ENCODE measurements at regions of chr4 and their contacts with region 1.

Region 1: DNA sequence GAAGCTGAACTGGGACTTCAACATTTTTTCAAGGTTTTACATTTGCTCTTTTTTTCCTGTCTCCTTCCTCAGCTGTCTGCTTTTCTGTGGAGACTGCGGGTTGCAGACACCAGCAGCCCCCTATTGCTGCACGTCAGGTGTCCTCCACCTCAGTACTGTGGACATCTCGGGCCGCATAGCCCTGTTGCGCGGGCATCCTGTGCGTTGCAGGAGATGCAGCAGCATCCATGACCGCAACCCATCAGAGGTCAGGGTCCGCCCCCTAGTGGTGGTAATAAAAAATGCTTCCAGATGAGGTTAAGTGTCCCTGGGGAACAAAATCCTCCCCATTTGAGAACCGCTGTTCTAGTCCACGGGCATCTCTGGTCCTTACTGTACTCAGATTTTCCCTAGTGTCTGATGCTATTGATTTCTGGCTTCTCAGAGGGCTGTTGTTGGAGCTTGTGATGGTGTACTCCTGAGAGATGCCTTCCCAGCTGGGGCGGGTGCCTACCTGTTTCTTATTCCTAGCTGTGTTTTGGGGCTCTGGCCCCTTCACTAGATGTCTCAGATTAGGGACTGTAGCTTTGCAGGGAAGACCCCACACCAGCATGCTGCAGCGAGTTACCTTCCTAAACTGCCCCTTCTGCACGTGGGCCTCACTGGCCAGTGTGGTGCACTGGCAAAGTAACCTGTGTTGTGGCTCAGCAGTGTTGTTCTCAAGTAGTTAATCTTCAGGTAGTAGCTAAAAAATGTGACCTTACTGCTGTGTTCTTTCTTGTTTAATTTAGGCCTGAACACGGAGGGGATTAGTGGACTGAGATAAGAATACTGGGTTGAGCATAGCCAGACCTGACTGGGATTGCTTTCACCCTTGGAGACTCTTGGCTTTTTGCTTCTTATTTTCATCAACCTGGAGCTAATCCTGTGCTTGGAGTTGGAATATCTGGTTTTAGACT is 28.2 kb downstream of the NSD2 start:
- DNase-seq: peak; percentile 87
- CTCF ChIP-seq: peak; percentile 86

Region 2: GRCh38 chr4:1533401-1534064 is 365.9 kb before region 1 on chr4:
- CTCF ChIA-PET with region 1: no interaction called
- POLR2A ChIA-PET with region 1: no interaction called
- DNase-seq: no peak
- CTCF ChIP-seq: no peak

Region 3: GRCh38 chr4:1809754-1810511 is 89.5 kb before region 1 on chr4:
- CTCF ChIA-PET with region 1: interaction called, 17 read pairs
- POLR2A ChIA-PET with region 1: no interaction called
- DNase-seq: peak; percentile 89
- CTCF ChIP-seq: peak; percentile 95

Region 4: DNA sequence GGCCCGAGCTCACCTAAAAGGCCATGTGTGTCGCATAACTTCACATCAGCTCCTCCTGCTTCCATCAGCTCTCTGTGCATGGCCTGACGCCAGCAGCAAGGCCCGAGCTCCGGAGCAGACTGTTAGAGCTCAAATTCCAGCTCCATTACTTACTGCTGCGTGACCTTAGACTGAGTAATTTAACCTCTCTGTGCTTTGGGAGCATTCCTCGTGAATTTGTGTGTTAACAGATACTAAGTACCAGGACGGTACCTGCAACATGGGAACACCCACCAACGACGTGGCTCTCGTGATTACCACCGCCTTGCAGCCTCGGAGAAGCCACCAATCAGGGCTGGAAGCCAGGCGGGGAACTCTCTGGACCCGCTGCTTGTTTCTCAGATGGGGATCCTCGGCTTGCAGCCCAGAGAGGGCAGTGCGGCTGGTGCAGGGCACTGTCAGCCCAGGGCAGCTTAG is 56.4 kb before region 1 on chr4:
- CTCF ChIA-PET with region 1: interaction called, 15 read pairs
- POLR2A ChIA-PET with region 1: no interaction called
- DNase-seq: no peak
- CTCF ChIP-seq: no peak

Region 5: GRCh38 chr4:1866189-1866661 is 33.2 kb before region 1 on chr4:
- CTCF ChIA-PET with region 1: interaction called, 15 read pairs
- POLR2A ChIA-PET with region 1: no interaction called
- DNase-seq: no peak
- CTCF ChIP-seq: no peak

Region 6: DNA sequence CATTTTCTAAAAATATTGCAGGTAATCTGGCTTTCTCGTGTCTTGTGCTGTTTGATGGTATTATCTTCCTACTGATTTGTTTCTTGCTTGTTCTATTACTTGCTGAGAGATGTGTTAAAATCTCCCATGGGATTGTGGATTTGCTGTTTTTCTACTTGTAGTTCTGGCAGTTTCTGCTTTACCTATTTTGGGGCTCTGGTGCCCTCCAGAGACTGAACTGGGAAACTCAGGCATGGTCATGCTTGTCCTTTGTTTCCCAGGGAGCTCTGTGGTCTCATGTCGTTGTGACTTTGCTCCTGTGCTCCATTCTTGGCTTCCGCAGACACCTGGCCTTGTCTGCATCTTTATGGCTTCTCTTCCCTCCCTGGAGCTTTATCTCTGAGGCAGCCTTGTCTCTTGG is 11.2 kb after region 1 on chr4:
- CTCF ChIA-PET with region 1: interaction called, 66 read pairs
- POLR2A ChIA-PET with region 1: no interaction called
- DNase-seq: no peak
- CTCF ChIP-seq: peak; percentile 18

Region 7: GRCh38 chr4:1967512-1968149 is 68.2 kb after region 1 on chr4:
- CTCF ChIA-PET with region 1: no interaction called
- POLR2A ChIA-PET with region 1: no interaction called
- DNase-seq: no peak
- CTCF ChIP-seq: no peak

Region 8: GRCh38 chr4:2041234-2042130 is 142.1 kb after region 1 on chr4:
- CTCF ChIA-PET with region 1: no interaction called
- POLR2A ChIA-PET with region 1: no interaction called
- DNase-seq: peak; percentile 94
- CTCF ChIP-seq: no peak

Region 9: GRCh38 chr4:2177443-2178093 is 278.1 kb after region 1 on chr4:
- CTCF ChIA-PET with region 1: no interaction called
- POLR2A ChIA-PET with region 1: no interaction called
- DNase-seq: no peak
- CTCF ChIP-seq: no peak